ENCODE measurements at regions of chr12 and their contacts with region 1.

Region 1: GRCh38 chr12:45990468-45991283 is at the start of gene SCAF11:
- DNase-seq: peak; percentile 99 to 100 (median 100)
- H3K4me3 ChIP-seq: peak within 1 kb of the TSS; percentile 64 to 99 (median 88)
- H3K27ac ChIP-seq: peak within 1 kb of the TSS; percentile 92 to 99 (median 98)
- H3K27me3 ChIP-seq: no peaks in the 10 kb centered on the region
- CTCF ChIP-seq: peak; percentile 83 to 99 (median 94)
- total RNA-seq, gene SCAF11: 54.6 to 110 (median 75.2) TPM

Region 2: DNA sequence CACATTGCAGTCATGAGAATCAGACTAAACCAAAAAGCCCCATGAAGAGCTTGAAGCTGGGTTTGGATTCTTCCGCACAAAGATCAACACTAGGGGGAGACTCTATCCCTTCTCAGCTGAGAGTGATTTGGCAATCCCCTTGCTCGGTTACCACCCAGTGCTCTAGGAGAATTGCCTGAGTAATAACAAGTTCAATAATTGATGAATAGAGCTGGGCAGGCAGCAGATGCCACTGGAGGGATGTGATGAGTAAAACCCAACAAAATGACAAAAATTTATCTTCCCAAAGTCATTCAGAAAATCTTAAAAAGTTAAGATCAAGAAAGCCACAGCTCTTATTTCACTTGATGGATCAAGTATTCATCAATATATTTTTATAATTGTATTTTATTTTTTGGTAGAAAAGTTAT is 446.8 kb before region 1 on chr12:
- intact Hi-C with region 1: loop called in 1 of 2 experiments (anchors 10 kb)
- DNase-seq: peak in 1 of 10 donors; percentile 29
- H3K4me3 ChIP-seq: peak overlapping the region in 1 of 59 donors; percentile 3
- H3K27ac ChIP-seq: no peak overlapping the region
- H3K27me3 ChIP-seq: no peaks in the 10 kb centered on the region
- CTCF ChIP-seq: peak; percentile 46 to 87 (median 75)

Region 3: GRCh38 chr12:45762185-45763110 is 228.2 kb before region 1 on chr12:
- intact Hi-C with region 1: loop called (anchors 5 to 10 kb)
- DNase-seq: no peak
- H3K4me3 ChIP-seq: peak overlapping the region in 2 of 59 donors; percentile 0 to 4
- H3K27ac ChIP-seq: peak overlapping the region in 13 of 59 donors; percentile 0 to 66 (median 39)
- H3K27me3 ChIP-seq: no peaks in the 10 kb centered on the region
- CTCF ChIP-seq: peak; percentile 36 to 81 (median 63)

Region 4: DNA sequence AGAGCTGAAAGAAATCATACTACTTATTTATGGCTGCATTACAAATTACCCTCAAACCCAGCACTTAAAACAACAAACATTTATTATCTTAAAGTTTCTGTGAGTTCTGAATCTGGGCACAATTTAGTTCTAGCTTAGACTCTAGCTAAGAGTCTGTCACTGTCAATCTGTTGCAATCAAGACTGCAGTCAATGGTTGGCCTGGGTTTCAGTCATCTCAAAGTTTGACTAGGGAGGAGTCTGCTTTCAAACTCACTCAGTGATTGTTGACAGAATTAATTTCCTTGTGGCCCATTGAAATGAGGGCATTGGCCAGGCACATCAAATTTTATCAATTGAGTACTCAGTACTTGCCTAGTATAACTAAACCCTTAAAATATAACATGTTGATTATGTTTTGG is 209.6 kb before region 1 on chr12:
- intact Hi-C with region 1: no loop called
- DNase-seq: no peak
- H3K4me3 ChIP-seq: no peak overlapping the region
- H3K27ac ChIP-seq: no peak overlapping the region
- H3K27me3 ChIP-seq: no peaks in the 10 kb centered on the region
- CTCF ChIP-seq: no peak

Region 5: DNA sequence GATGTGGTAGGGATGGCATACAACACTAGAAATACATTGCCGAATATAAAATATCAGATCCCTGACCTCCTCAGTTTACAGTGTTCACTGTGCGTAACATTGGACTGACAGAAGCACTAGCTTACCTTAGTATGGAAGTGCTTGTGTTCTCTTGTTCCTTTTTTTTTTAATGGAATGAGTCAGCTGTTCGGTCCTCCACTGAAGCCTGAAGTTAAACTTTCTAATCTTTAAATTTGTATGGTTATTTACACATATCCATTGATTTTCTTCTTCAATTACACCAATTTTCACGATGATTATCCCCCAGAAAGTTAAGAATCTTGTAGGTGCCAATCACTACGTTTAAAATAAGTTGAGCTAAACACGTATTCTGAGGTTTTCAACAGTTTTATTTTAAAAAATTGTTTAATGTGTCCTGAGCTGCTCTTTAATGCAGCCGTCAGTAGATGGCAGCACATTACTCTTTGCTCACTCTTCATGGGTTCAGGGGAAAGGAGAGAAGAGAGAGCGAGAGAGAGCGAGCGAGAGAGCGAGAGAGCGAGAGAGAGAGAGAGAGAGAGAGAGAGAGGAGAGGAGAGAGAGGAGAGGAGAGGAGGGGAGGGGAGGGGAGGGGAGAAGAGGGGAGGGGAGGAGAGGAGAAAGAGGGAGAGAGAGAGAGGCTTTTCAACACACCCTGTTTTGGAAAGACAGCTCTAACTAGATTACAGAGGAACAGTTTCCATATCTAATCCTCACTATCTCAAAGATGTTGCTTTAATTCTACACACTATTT is 134.4 kb after region 1 on chr12:
- intact Hi-C with region 1: loop called in 1 of 2 experiments (anchors 10 kb)
- DNase-seq: peak in 5 of 10 donors; percentile 20 to 66 (median 52)
- H3K4me3 ChIP-seq: peak overlapping the region in 56 of 59 donors; percentile 3 to 63 (median 42)
- H3K27ac ChIP-seq: peak overlapping the region in 31 of 59 donors; percentile 2 to 76 (median 53)
- H3K27me3 ChIP-seq: no peaks in the 10 kb centered on the region
- CTCF ChIP-seq: peak; percentile 48 to 79 (median 68)

Region 6: DNA sequence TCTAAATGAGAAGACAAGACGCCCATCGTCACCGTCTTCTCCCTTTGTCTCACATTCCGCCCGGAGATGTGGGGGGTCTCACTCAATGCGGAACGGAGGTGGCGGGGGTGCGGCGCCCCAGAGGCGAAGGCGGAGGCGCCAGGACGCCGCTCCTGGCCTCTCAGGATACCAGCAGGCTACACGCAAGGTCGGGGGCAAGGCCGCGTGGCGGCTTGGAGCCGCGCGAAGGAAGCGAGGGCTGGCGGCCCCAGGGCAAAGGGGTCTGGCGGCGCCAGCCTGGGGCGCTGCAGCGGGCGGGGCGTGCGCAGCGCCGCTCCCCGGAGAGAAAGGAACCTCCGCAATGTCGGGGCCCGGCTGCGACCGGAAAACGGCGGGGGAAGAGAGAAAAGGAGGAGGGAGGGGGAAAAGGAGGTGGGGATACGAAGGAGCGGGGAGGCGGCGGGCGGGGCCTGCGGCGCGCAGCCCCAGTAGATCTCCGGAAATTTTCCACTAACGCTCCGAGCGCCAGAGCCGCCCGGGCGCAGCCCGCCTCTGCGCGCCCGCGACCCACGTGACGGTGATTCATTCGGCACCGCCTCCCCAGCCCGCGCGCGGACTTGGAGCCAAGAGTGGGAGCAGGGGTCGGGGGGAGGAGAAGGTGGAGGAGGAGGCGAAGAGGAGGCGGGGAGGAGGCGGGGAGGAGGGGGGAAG is 392.4 kb after region 1 on chr12:
- intact Hi-C with region 1: loop called (anchors 2 to 5 kb)
- DNase-seq: peak; percentile 93 to 99 (median 95)
- H3K4me3 ChIP-seq: peak overlapping the region; percentile 51 to 93 (median 83)
- H3K27ac ChIP-seq: peak overlapping the region; percentile 92 to 100 (median 99)
- H3K27me3 ChIP-seq: no peaks in the 10 kb centered on the region
- CTCF ChIP-seq: peak in 45 of 56 donors; percentile 11 to 63 (median 36)

Measured in dorsolateral prefrontal cortex (tissue), 120 donors.